ENCODE measurements at regions of chr2 and their contacts with region 1.

Region 1: DNA sequence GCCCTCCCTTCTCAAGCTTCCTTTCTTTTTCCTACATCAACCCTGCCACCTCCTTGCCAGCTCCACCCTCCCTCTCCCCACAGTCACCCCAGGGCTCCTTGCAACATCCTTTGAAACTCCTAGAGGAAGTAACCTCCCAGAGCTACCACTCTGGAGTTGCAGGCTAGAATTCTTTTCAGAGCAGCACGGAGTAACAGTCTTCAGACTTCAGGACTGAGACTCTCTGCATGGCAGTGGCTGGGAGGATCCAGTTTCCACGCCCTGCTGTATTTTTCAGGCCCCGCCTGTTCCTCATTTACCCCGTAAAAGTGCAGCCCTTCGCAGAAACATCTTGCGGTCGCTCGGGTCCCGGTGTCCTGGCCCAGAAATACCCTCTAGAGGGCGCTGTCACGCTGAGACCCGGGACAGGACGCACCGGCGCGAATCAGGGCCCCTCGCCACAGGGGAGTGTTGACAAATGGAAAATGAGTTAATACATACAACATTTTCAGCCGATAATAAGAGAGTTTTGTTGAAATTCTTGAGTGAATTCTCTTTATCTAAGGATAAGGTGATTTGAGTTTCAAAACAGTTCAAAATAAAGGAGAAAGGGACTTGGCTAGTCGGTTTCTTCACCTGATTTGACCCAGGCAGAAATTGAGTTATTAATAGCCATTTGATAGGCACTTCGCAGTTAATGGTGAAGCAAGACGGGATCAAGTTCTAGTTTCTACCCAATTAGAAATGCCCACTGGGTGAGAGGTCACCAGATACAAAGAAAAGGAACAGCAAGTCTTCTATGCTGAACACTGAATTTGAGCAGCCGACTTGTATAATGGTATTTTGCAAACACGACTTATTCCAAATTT is 18.5 kb upstream of the NTSR2 start:
- DNase-seq: peak; percentile 88
- H3K4me3 Mint-ChIP-seq: peak overlapping the region; percentile 7
- H3K27ac Mint-ChIP-seq: no peak overlapping the region
- H3K4me1 Mint-ChIP-seq: peaks cover 11% of the 10 kb centered on the region
- H3K27me3 Mint-ChIP-seq: peaks cover 12% of the 10 kb centered on the region

Region 2: DNA sequence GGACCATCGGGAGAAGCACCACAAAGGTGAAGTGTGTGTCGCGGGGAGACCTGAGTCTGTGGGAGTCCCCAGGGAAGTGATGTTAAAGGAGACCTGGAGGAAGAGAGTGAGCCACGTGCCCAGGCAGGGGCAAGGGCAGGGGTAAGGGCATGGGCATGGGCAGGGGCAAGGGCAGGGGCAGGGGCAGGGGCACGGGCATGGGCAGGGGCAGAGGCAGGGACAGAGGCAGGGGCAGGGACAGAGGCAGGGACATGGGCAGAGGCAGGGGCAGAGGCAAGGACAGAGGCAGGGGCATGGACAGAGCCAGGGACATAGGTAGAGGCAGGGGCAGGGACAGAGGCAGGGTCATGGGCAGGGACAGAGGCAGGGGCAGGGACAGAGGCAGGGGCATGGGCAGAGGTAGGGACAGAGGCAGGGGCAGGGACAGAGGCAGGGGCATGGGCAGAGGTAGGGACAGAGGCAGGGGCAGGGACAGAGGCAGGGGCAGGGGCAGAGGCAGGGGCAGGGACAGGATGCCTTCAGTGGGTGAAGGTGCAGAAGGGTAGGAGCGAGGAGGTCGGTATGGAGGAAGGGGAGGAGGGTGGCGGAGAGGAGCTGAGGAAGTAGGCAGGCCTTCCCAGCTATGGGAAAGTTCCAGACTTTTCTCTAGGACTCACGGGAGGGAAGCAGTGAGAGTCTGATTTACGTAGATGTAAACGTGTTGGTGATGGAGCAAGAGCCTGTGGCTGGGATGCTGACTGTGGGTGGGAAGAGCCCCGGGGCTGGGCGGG is 51.7 kb before region 1 on chr2:
- CTCF ChIA-PET with region 1: no interaction called
- POLR2A ChIA-PET with region 1: no interaction called
- intact Hi-C with region 1: no loop called
- DNase-seq: no peak
- H3K4me3 Mint-ChIP-seq: no peak overlapping the region
- H3K27ac Mint-ChIP-seq: no peak overlapping the region
- H3K4me1 Mint-ChIP-seq: no peaks in the 10 kb centered on the region
- H3K27me3 Mint-ChIP-seq: peaks cover 2% of the 10 kb centered on the region

Region 3: DNA sequence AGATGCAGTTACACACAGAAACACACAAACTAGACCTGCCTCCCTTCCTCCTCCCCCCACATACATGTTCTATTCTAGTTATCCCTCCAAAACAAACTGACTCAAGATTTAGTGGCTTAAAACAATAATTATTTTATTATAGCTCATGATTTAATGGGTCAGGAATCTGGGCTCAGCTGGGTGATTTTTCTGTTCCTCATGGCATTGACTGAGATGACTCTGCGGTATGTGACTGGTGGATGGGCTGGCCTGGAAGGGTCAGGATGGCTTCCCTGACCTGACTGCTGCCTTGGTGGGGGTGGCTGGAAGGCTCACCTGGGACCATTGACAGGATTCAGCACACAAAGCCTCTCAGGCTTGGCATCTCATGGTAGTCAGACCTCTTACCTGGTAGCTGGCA is 15.3 kb after region 1 on chr2:
- CTCF ChIA-PET with region 1: interaction called, 15 read pairs
- POLR2A ChIA-PET with region 1: interaction called, 3 read pairs
- intact Hi-C with region 1: no loop called
- DNase-seq: no peak
- H3K4me3 Mint-ChIP-seq: no peak overlapping the region
- H3K27ac Mint-ChIP-seq: no peak overlapping the region
- H3K4me1 Mint-ChIP-seq: no peaks in the 10 kb centered on the region
- H3K27me3 Mint-ChIP-seq: no peaks in the 10 kb centered on the region

Region 4: GRCh38 chr2:11743846-11744553 is 55.6 kb after region 1 on chr2:
- CTCF ChIA-PET with region 1: interaction called, 25 read pairs
- POLR2A ChIA-PET with region 1: no interaction called
- intact Hi-C with region 1: loop called (anchors 1 kb)
- DNase-seq: peak; percentile 93
- H3K4me3 Mint-ChIP-seq: peak overlapping the region; percentile 48
- H3K27ac Mint-ChIP-seq: peak overlapping the region; percentile 77
- H3K4me1 Mint-ChIP-seq: peaks cover 54% of the 10 kb centered on the region
- H3K27me3 Mint-ChIP-seq: no peaks in the 10 kb centered on the region

Region 5: GRCh38 chr2:11784747-11785610 is 96.5 kb after region 1 on chr2:
- CTCF ChIA-PET with region 1: interaction called, 364 read pairs
- POLR2A ChIA-PET with region 1: no interaction called
- intact Hi-C with region 1: no loop called
- DNase-seq: peak; percentile 46
- H3K4me3 Mint-ChIP-seq: no peak overlapping the region
- H3K27ac Mint-ChIP-seq: no peak overlapping the region
- H3K4me1 Mint-ChIP-seq: no peaks in the 10 kb centered on the region
- H3K27me3 Mint-ChIP-seq: no peaks in the 10 kb centered on the region

Measured in activated CD4-positive, alpha-beta memory T cell treated with anti-CD3 and anti-CD28 coated beads for 36 hours (primary cell).